ENCODE measurements at regions of chr7 and their contacts with region 1.

Region 1: DNA sequence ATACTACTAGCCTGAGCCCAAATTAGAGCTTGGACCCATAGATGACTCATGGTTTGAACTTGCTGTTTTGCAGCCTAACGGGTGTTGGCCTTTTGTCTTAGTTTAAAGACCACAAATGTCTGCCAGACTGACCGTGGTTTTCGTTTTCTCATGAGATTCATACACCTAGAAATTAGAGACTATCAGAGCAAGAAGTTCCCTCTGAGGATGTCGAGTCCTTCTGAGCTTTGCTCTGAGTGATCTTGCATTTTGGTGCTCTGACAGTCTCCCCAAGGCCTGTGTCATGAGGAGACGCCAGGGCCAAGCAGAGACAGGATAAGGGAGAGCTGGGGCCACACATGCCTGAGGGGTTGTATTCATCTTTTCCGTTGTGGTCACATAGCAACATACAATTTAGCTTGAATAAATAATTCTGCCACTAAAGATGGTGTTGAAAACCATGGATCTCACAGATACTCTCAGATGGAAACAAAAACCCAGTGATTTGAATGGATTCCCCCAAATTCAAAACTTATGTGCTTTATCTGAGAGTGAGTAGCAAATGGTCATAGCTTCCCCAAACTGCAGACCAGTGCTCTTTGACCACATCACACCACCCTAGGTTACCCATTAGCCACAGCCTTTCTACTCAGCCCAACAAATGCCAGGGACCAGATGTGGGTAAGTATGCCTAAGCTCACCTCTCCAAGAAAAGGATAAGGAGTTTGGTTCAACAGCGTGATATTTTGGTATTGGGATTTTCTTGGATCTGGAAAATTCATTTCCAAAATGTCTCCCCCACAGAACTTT is 762.0 kb upstream of the IGFBP3 start:
- DNase-seq: peak; percentile 59
- H3K4me3 ChIP-seq: no peak overlapping the region
- H3K27me3 ChIP-seq: no peaks in the 10 kb centered on the region
- CTCF ChIP-seq: no peak

Region 2: GRCh38 chr7:46387646-46388045 is 295.4 kb before region 1 on chr7:
- CTCF ChIA-PET with region 1: no interaction called
- POLR2A ChIA-PET with region 1: interaction called, 10 read pairs
- DNase-seq: no peak
- H3K4me3 ChIP-seq: no peak overlapping the region
- H3K27me3 ChIP-seq: no peaks in the 10 kb centered on the region
- CTCF ChIP-seq: no peak

Region 3: GRCh38 chr7:46695051-46695707 is 12.1 kb after region 1 on chr7:
- CTCF ChIA-PET with region 1: interaction called, 11 read pairs
- POLR2A ChIA-PET with region 1: no interaction called
- DNase-seq: no peak
- H3K4me3 ChIP-seq: no peak overlapping the region
- H3K27me3 ChIP-seq: no peaks in the 10 kb centered on the region
- CTCF ChIP-seq: 0 out of 2 replicates have a peak, but pooled peaks have one; percentile 13

Measured in BJ (cell line).